Activated T-helper 1 cell treated with anti-CD3 and anti-CD28 coated beads, Interleukin-12 subunit alpha, Interleukin-12 subunit beta, Interleukin-2, Interleukin-4 antibody, amounts not matched to agents 30 ng/mL and 10 ng/mL and 1 ng/mL, durations not matched to agents 14 hours and 24 hours and 36 hours (primary cell): ENCODE measurements at regions of chr3 and their contacts with region 1.

Region 1: GRCh38 chr3:18864933-18865731 is 283.2 kb upstream of the KCNH8 start:
- DNase-seq: no peak
- H3K4me3 Mint-ChIP-seq: no peak overlapping the region
- H3K27ac Mint-ChIP-seq: no peak overlapping the region
- H3K4me1 Mint-ChIP-seq: peaks cover 13% of the 10 kb centered on the region
- H3K27me3 Mint-ChIP-seq: no peaks in the 10 kb centered on the region

Region 2: GRCh38 chr3:18847583-18848197 is 17.4 kb before region 1 on chr3:
- intact Hi-C with region 1: loop called (anchors 2 kb)
- DNase-seq: no peak
- H3K4me3 Mint-ChIP-seq: no peak overlapping the region
- H3K27ac Mint-ChIP-seq: no peak overlapping the region
- H3K4me1 Mint-ChIP-seq: peaks cover 22% of the 10 kb centered on the region
- H3K27me3 Mint-ChIP-seq: peaks cover 7% of the 10 kb centered on the region